ENCODE measurements at regions of chr1 and their contacts with region 1.

Region 1: DNA sequence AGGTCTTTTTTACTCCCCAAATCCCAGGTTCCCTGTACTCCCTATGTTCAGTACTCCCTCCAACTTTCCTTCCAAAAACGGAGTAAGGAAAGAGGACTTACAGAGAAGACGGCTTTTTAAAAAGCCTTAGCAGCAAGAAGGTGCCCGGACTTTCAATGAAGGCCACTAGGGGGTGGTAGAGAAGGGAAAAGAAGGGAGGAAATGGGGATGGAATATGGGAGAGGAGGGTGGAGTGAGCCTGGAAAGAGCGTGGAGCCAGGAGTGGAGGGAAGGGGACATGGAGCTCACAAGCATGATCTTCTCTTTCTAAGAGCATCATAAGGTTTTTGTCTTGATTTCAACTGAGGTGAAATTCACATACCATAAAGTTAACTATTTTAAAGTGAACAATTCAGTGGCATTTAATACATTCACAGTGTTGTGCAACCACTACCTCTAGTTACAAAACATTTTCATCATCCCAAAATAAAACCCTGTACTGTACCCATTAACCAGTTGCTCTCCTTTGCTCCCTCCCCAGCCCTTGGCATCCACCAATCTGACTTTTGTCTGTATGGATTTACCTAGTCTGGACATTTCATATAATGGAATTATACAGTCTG is 129.9 kb downstream of the ZNF281 start:
- DNase-seq: peak in 6 of 9 donors; percentile 7 to 31 (median 16)
- ATAC-seq: peak; percentile 40
- H3K4me3 ChIP-seq: no peak overlapping the region
- H3K4me3 Mint-ChIP-seq: no peak overlapping the region
- H3K27ac ChIP-seq: no peak overlapping the region
- H3K27ac Mint-ChIP-seq: no peak overlapping the region
- H3K4me1 ChIP-seq: no peaks in the 10 kb centered on the region
- H3K4me1 Mint-ChIP-seq: peaks cover 0 to 4% (median 0%) of the 10 kb centered on the region in 7 donors
- H3K27me3 ChIP-seq: no peaks in the 10 kb centered on the region
- H3K27me3 Mint-ChIP-seq: peaks cover 0 to 14% (median 0%) of the 10 kb centered on the region in 5 donors

Region 2: DNA sequence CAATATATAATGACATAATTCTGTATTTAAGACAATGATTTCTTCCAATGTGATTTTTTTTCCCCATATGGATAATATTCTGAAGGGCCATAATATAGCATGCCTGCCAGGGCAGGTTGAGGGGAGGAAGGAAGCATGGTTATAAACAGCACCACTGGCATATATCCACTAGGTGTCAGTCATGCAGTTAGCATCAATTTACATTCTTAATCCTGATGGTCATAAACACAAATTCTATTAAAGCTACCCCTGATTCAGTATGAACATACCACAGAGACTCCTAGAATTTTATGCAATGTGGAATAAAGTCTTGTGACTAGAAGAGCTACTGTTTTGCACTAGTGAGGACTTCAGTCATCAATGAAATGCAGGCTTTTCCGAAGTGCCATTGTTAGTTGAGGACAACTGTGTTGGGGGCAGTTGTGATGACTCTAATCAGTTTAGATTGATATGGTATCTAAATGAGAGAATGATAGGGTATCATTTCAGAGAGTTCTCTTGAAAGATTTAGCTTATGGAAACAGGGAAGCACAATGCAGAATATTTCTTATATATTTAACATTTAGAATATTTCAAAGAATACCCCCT is 595.1 kb before region 1 on chr1:
- CTCF ChIA-PET with region 1: no interaction called
- POLR2A ChIA-PET with region 1: no interaction called
- intact Hi-C with region 1: loop called (anchors 2 to 10 kb)
- DNase-seq: peak in 7 of 9 donors; percentile 7 to 38 (median 28)
- ATAC-seq: peak; percentile 85
- H3K4me3 ChIP-seq: no peak overlapping the region
- H3K4me3 Mint-ChIP-seq: no peak overlapping the region
- H3K27ac ChIP-seq: no peak overlapping the region
- H3K27ac Mint-ChIP-seq: no peak overlapping the region
- H3K4me1 ChIP-seq: no peaks in the 10 kb centered on the region
- H3K4me1 Mint-ChIP-seq: no peaks in the 10 kb centered on the region
- H3K27me3 ChIP-seq: no peaks in the 10 kb centered on the region
- H3K27me3 Mint-ChIP-seq: peaks cover 7 to 33% (median 8%) of the 10 kb centered on the region in 5 donors

Region 3: GRCh38 chr1:200217709-200218108 is 62.2 kb before region 1 on chr1:
- CTCF ChIA-PET with region 1: no interaction called
- POLR2A ChIA-PET with region 1: no interaction called
- intact Hi-C with region 1: no loop called
- DNase-seq: no peak
- ATAC-seq: no peak
- H3K4me3 ChIP-seq: no peak overlapping the region
- H3K4me3 Mint-ChIP-seq: no peak overlapping the region
- H3K27ac ChIP-seq: no peak overlapping the region
- H3K27ac Mint-ChIP-seq: no peak overlapping the region
- H3K4me1 ChIP-seq: no peaks in the 10 kb centered on the region
- H3K4me1 Mint-ChIP-seq: peaks cover 0 to 16% (median 0%) of the 10 kb centered on the region in 7 donors
- H3K27me3 ChIP-seq: no peaks in the 10 kb centered on the region
- H3K27me3 Mint-ChIP-seq: peaks cover 0 to 20% (median 5%) of the 10 kb centered on the region in 5 donors

Region 4: DNA sequence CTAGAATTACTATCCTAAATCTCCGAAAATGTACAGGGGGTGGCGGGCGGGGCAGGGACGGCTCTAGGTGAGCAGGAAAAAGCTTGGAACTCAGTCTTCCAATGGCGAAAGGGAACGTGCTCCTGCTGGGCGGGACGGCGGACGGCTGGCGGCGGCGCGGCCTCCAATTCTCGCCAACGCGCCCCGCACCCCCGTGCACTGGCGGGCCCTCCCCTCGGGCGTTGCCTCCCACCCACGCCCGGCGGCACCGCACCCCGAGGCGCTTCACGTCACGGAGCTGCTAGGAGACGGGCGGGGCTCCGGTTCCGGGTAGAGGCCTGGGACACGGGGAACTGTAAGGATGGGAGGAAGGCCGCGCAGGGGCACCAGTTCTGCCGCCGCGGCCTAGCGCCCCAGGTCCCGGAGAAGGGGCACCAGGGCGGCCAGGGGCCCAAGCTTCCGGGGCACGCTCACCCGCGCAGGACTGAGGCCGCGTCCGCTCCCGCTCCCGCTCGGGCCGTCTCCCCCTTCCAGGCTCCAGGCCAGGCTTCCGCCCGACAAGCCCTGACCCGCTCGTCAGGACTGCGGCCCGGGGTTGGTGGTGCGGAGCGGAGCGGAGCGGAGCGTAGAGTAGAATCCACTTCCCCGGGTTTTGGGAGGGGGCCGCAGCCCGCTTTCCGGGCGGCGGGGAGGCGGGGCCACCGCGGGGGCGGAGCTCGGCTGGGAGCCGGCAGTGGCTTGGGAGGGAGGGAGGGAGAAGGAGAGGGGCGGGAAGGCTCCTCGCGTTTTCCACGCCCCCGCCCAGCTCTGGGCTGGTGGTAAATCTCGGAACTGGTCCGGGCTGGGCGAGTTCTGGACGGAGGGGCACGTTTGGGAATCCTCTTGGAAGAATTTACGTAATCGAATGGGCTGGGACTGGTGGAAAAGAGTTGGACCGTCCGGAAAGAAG is 389.7 kb after region 1 on chr1 and contains the start of gene DDX59:
- CTCF ChIA-PET with region 1: no interaction called
- POLR2A ChIA-PET with region 1: no interaction called
- intact Hi-C with region 1: no loop called
- DNase-seq: peak; percentile 81 to 95 (median 85)
- ATAC-seq: peak; percentile 92
- H3K4me3 ChIP-seq: peak within 1 kb of the TSS; percentile 93
- H3K4me3 Mint-ChIP-seq: peak within 1 kb of the TSS; percentile 96 to 99 (median 98)
- H3K27ac ChIP-seq: peak within 1 kb of the TSS; percentile 98
- H3K27ac Mint-ChIP-seq: peak within 1 kb of the TSS; percentile 89 to 99 (median 97)
- H3K4me1 ChIP-seq: peaks cover 13 to 16% of the 10 kb centered on the region in 2 donors
- H3K4me1 Mint-ChIP-seq: peaks cover 20 to 60% (median 51%) of the 10 kb centered on the region in 7 donors
- H3K27me3 ChIP-seq: no peaks in the 10 kb centered on the region
- H3K27me3 Mint-ChIP-seq: no peaks in the 10 kb centered on the region
- total RNA-seq, gene DDX59: 20.6 to 41.3 (median 31.1) TPM

Measured in naive thymus-derived CD4-positive, alpha-beta T cell (primary cell).